ENCODE measurements at regions of chr7 and their contacts with region 1.

Region 1: GRCh38 chr7:35537067-35538023 is 157.6 kb downstream of the HERPUD2 start:
- DNase-seq: peak; percentile 71
- H3K4me3 Mint-ChIP-seq: peak overlapping the region; percentile 60
- H3K27ac Mint-ChIP-seq: no peak overlapping the region
- H3K4me1 Mint-ChIP-seq: no peaks in the 10 kb centered on the region
- H3K27me3 Mint-ChIP-seq: peaks cover 34% of the 10 kb centered on the region
- CTCF ChIP-seq: peak; percentile 87

Region 2: DNA sequence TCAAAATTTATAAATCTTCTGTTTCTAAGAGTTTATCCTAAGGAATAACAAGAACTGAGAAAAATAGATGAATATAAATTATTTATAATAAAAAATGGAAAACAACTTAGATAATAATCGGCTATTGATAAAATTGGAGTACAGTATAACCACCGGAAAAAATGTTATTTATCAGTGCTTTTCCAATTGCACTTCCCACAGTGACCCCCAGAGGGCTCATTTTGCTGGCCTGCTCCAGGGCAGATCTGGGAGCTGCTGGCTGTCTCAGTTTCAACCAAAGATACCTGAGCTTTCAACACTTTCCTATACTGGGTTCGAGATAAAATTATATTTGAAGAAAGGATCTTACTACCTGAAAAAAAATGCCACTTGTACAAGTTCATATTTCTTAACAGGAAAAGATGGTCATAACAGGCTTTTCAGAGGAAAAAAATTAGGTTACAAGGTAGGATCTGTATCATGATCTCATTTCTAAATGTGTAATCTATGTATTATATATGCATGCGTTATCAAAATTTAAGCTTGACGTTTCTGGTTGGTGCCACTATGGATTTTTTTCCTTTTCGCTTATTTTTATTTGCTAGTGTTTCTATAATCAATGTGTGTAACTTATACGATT is 713.6 kb before region 1 on chr7:
- CTCF ChIA-PET with region 1: no interaction called
- POLR2A ChIA-PET with region 1: no interaction called
- intact Hi-C with region 1: loop called (anchors 5 kb)
- DNase-seq: peak; percentile 57
- H3K4me3 Mint-ChIP-seq: no peak overlapping the region
- H3K27ac Mint-ChIP-seq: no peak overlapping the region
- H3K4me1 Mint-ChIP-seq: no peaks in the 10 kb centered on the region
- H3K27me3 Mint-ChIP-seq: peaks cover 10% of the 10 kb centered on the region
- CTCF ChIP-seq: peak; percentile 92

Region 3: GRCh38 chr7:35185907-35186731 is 351.2 kb before region 1 on chr7:
- CTCF ChIA-PET with region 1: interaction called, 4 read pairs
- POLR2A ChIA-PET with region 1: no interaction called
- intact Hi-C with region 1: loop called (anchors 2 kb)
- DNase-seq: no peak
- H3K4me3 Mint-ChIP-seq: peak overlapping the region; percentile 66
- H3K27ac Mint-ChIP-seq: no peak overlapping the region
- H3K4me1 Mint-ChIP-seq: peaks cover 6% of the 10 kb centered on the region
- H3K27me3 Mint-ChIP-seq: peaks cover 34% of the 10 kb centered on the region
- CTCF ChIP-seq: no peak

Region 4: GRCh38 chr7:35424869-35425495 is 112.4 kb before region 1 on chr7:
- CTCF ChIA-PET with region 1: interaction called, 7 read pairs
- POLR2A ChIA-PET with region 1: no interaction called
- intact Hi-C with region 1: loop called (anchors 1 kb)
- DNase-seq: peak; percentile 60
- H3K4me3 Mint-ChIP-seq: no peak overlapping the region
- H3K27ac Mint-ChIP-seq: no peak overlapping the region
- H3K4me1 Mint-ChIP-seq: no peaks in the 10 kb centered on the region
- H3K27me3 Mint-ChIP-seq: peaks cover 38% of the 10 kb centered on the region
- CTCF ChIP-seq: peak; percentile 70